Tibial artery (tissue), 4 donors: ENCODE measurements at regions of chr22 and their contacts with region 1.

Region 1: DNA sequence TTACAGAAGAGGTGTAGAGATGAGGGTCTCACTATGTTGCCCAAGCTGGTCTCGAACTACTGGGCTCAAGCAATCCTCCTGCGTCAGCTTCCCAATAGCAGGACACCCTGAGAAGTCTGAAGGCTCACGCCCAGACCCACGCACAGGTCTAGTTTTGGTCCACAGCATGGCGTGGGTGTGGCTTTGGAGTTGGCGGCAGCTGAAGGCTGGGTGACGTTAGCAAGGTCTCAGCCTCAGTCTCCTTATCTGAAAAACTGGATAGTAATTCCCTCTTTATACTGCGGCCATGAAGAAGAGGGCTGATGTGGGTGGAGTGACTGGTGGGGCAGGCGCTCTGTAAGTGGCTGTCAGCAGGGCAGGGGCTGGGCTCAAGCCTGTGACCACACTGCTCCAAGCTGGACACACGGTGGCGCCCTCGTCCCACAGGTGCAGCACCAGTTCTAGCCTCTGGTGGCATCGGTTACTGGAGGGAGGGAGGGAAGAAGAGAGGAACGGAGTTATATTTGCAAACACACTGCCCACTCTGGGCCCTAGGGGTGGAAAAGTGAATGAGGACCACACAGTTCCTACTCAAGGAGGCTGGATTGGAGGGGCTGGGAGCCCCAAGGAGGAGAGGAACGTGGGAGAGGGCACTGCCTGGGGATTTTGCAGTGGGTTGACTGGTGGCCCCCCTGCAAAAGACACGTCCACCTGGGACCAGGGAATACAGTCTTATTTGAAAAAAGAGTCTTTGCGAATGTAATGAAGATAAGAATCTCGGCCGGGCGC is 19.6 kb upstream of the CARD10 start:
- DNase-seq: peak; percentile 91 to 96
- H3K4me3 ChIP-seq: no peak overlapping the region
- H3K27ac ChIP-seq: no peak overlapping the region
- H3K4me1 ChIP-seq: peaks cover 0 to 23% (median 2%) of the 10 kb centered on the region in 4 donors
- H3K27me3 ChIP-seq: no peaks in the 10 kb centered on the region
- CTCF ChIP-seq: peak; percentile 93 to 100

Region 2: GRCh38 chr22:37566903-37567820 is 28.4 kb after region 1 on chr22:
- intact Hi-C with region 1: loop called (anchors 2 kb)
- DNase-seq: peak; percentile 78 to 87
- H3K4me3 ChIP-seq: no peak overlapping the region
- H3K27ac ChIP-seq: peak overlapping the region; percentile 98 to 99
- H3K4me1 ChIP-seq: peaks cover 9 to 84% (median 73%) of the 10 kb centered on the region in 4 donors
- H3K27me3 ChIP-seq: no peaks in the 10 kb centered on the region
- CTCF ChIP-seq: peak; percentile 97

Region 3: GRCh38 chr22:37591823-37592404 is 53.1 kb after region 1 on chr22:
- intact Hi-C with region 1: loop called (anchors 2 kb)
- DNase-seq: no peak
- H3K4me3 ChIP-seq: no peak overlapping the region
- H3K27ac ChIP-seq: no peak overlapping the region
- H3K4me1 ChIP-seq: peaks cover 0 to 9% (median 2%) of the 10 kb centered on the region in 4 donors
- H3K27me3 ChIP-seq: peaks cover 0 to 37% of the 10 kb centered on the region in 2 donors
- CTCF ChIP-seq: no peak

Region 4: GRCh38 chr22:37604875-37605274 is 66.1 kb after region 1 on chr22:
- intact Hi-C with region 1: no loop called
- DNase-seq: no peak
- H3K4me3 ChIP-seq: no peak overlapping the region
- H3K27ac ChIP-seq: no peak overlapping the region
- H3K4me1 ChIP-seq: peaks cover 0 to 27% (median 19%) of the 10 kb centered on the region in 4 donors
- H3K27me3 ChIP-seq: peaks cover 0 to 56% of the 10 kb centered on the region in 2 donors
- CTCF ChIP-seq: no peak